Transverse colon (tissue), 4 donors: ENCODE measurements at regions of chr9 and their contacts with region 1.

Region 1: DNA sequence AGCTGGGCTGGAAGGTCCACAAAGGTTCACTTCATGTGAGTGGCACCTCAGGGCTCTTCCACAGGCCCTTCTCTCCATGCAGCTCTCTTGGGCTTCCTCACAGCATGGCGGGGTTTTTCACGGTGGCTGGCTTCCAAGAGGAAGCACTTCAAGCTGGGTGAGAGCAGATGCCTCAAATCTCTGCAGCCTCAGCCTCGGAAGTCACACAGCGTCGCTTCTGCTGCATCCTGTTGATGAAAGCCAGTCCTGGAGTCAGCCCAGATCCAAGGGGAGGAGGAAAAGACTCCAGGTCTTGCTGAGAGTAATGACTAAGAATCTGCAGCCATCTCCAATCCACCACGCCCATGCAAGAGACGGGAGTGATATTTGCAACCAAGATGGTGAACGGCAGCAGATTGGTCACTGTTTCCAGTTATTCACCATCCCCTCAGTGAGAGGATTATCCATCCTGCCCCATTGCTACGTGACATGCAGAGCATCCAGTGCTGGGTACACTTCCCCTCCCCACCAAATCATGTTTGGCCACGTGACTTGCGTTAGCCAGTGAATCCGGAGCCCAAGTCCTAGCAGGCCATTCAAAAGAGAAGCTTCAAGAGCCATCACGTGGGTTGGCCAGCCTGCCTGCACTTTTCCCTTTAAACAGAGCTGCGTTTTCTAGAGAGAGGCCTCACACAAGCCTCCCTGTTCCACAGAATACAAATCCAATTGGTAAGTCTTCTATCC is 173.9 kb downstream of the C9orf50 start:
- DNase-seq: no peak
- H3K4me3 ChIP-seq: no peak overlapping the region
- H3K27ac ChIP-seq: no peak overlapping the region
- H3K4me1 ChIP-seq: peaks cover 4 to 15% (median 8%) of the 10 kb centered on the region in 4 donors
- H3K27me3 ChIP-seq: no peaks in the 10 kb centered on the region
- CTCF ChIP-seq: no peak
- EP300 ChIP-seq: no peak
- POLR2A ChIP-seq: no peak

Region 2: DNA sequence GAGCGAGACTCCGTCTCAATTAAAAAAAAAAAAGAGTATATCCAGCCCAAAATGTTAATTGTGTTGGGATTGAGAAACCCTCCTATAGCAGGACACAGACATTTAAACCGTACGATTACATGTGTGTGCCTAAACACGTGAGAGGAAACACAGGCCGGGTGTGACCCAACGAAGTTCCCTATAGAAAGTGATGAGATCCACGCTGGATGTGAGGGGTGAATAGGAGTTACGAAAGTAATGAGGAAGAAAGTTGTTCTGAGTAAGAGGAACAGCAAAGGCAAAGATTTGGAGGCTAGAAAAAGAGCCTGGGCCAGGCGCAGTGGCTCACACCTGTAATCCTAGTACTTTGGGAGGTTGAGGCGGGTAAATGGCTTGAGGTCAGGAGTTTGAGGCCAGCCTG is 1393.4 kb before region 1 on chr9:
- in situ Hi-C with region 1: no loop called
- intact Hi-C with region 1: loop called (anchors 5 kb)
- DNase-seq: no peak
- H3K4me3 ChIP-seq: no peak overlapping the region
- H3K27ac ChIP-seq: peak overlapping the region in 3 of 4 donors; percentile 66 to 78 (median 78)
- H3K4me1 ChIP-seq: peaks cover 18 to 52% (median 25%) of the 10 kb centered on the region in 4 donors
- H3K27me3 ChIP-seq: no peaks in the 10 kb centered on the region
- CTCF ChIP-seq: no peak
- EP300 ChIP-seq: no peak
- POLR2A ChIP-seq: no peak